Pancreas (tissue), 10 donors: ENCODE measurements at regions of chr7 and their contacts with region 1.

Region 1: DNA sequence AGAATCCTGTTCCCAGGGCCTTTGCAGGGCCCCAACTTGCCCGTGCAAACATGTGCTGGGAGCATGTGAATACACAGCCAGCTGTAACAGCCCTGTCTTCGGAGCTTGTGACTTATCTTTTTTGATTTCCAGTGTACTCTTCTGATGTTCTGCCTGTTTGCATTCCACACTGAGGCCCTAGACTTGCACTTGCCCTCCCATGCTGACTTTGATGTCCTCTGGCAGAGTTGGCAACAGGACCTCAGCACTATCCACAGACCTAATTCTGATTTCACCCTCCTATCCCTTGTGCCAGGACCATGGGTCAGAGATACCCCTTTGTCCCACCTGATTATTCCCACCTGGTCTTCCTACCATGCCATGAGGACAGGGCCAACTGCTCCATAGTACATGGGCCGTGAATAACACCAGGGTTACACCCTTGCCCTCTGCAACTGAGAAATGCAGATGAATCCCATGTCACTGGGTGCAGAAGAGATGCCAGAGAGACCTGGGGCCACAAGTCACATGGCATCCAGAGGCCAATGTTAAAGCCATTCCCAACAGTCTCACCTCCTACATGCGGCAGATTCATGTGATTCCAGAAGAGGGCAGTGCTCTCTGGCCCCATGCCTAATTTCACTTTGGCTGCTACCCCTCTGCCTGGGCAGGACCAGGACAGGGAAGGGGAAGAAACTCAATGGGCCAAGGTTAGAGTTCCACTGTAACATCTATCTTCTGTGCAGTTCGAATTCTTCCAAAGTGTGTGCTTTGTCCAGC is 43.0 kb downstream of the SCRN1 start:
- DNase-seq: peak in 4 of 6 donors; percentile 32 to 65 (median 48)
- ATAC-seq: peak; percentile 81 to 91 (median 84)
- H3K4me3 ChIP-seq: no peak overlapping the region
- H3K27ac ChIP-seq: no peak overlapping the region
- H3K4me1 ChIP-seq: peaks cover 0 to 4% (median 0%) of the 10 kb centered on the region in 3 donors
- H3K27me3 ChIP-seq: no peaks in the 10 kb centered on the region
- CTCF ChIP-seq: peak in 2 of 4 donors; percentile 18 to 30

Region 2: GRCh38 chr7:29825775-29826529 is 120.7 kb before region 1 on chr7:
- intact Hi-C with region 1: no loop called
- DNase-seq: no peak
- ATAC-seq: peak in 3 of 4 donors; percentile 32 to 60 (median 35)
- H3K4me3 ChIP-seq: no peak overlapping the region
- H3K27ac ChIP-seq: no peak overlapping the region
- H3K4me1 ChIP-seq: no peaks in the 10 kb centered on the region
- H3K27me3 ChIP-seq: no peaks in the 10 kb centered on the region
- CTCF ChIP-seq: no peak

Region 3: DNA sequence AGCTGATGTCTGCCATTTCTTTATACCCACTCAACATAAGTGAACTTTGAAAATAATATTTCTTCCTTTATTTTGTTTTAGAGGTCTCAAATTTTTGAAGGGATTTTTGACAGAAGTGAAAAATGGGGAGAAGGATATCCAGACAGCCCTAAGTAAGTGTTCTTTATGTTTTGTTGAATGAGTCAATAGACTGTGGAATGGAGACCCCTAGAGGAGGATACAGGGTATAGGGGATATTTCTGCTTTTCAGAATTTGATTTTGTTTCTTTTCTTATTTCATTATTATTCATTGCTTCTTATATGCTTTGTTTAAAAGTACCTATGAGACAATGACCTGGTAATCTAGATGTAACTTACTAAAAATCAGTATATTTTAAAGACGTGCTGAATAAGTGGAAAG is 116.0 kb after region 1 on chr7:
- intact Hi-C with region 1: loop called in 1 of 3 experiments (anchors 10 kb)
- DNase-seq: no peak
- ATAC-seq: peak; percentile 77 to 95 (median 92)
- H3K4me3 ChIP-seq: no peak overlapping the region
- H3K27ac ChIP-seq: no peak overlapping the region
- H3K4me1 ChIP-seq: no peaks in the 10 kb centered on the region
- H3K27me3 ChIP-seq: no peaks in the 10 kb centered on the region
- CTCF ChIP-seq: peak in 3 of 4 donors; percentile 29 to 43 (median 43)